ENCODE measurements at regions of chr4 and their contacts with region 1.

Region 1: DNA sequence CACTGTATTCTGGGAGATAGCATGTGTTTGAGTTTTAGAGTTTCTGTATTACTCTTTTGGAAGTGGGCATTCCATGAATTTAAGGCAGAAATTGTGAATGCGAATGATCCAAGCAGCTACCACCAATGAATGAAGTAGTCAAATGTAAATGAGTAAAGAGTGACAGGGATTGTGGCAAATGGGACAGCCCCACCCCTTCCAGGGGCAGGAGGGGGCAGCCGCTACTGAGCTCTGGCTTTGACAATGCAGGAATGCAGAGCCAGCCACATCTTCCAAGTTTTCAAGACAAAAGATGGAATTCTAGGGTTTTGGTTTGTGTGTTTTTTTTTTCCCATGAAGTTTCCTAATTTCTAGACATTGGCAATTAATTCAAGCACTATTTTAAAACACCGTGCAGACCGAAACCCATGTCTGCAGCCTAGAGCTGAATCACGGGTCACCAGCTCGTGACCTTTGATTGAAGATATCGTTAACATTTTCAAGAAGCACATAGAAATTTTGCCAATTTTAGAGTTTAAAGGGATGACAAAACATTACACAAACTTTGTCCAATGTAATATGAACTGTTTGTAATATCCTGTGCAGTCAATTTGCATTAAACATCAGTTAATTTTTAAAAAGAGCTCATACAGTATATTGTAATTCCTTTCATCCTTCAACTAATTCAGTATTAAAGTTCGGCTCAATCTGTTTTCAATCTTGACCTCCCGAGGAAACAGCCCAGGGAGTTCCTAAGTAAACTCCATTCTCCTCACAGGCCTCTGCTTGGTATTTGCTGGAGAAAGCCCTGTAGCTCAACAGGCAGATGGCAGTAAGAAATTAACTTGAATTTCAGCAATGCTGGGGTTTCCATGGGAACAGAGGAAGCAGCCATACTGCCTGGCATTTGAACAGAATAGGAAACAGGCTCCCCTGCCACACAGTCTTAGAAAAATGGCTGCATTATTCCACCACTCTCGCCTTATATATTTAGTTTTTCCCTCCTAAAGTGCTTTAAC is 83.4 kb downstream of the UCHL1 start:
- DNase-seq: no peak
- ATAC-seq: no peak
- H3K4me3 ChIP-seq: no peak overlapping the region
- H3K27ac ChIP-seq: no peak overlapping the region
- H3K4me1 ChIP-seq: no peaks in the 10 kb centered on the region
- H3K27me3 ChIP-seq: no peaks in the 10 kb centered on the region
- CTCF ChIP-seq: no peak

Region 2: GRCh38 chr4:41363384-41363981 is 23.4 kb after region 1 on chr4:
- CTCF ChIA-PET with region 1: interaction called, 13 read pairs
- POLR2A ChIA-PET with region 1: no interaction called
- in situ Hi-C with region 1: no loop called
- intact Hi-C with region 1: no loop called
- DNase-seq: no peak
- ATAC-seq: no peak
- H3K4me3 ChIP-seq: no peak overlapping the region
- H3K27ac ChIP-seq: no peak overlapping the region
- H3K4me1 ChIP-seq: no peaks in the 10 kb centered on the region
- H3K27me3 ChIP-seq: peaks cover 9% of the 10 kb centered on the region
- CTCF ChIP-seq: no peak

Measured in Panc1 (cell line).